Activated T-helper 1 cell treated with anti-CD3 and anti-CD28 coated beads, Interleukin-12 subunit alpha, Interleukin-12 subunit beta, Interleukin-2, Interleukin-4 antibody, amounts not matched to agents 30 ng/mL and 10 ng/mL and 1 ng/mL, durations not matched to agents 14 hours and 24 hours and 36 hours (primary cell): ENCODE measurements at regions of chr1 and their contacts with region 1.

Region 1: GRCh38 chr1:113811888-113812660 is at the start of gene RSBN1:
- DNase-seq: peak; percentile 99
- H3K4me3 Mint-ChIP-seq: peak within 1 kb of the TSS; percentile 96
- H3K27ac Mint-ChIP-seq: peak within 1 kb of the TSS; percentile 96
- H3K4me1 Mint-ChIP-seq: peaks cover 34% of the 10 kb centered on the region
- H3K27me3 Mint-ChIP-seq: no peaks in the 10 kb centered on the region
- total RNA-seq, gene RSBN1: 18.4 and 19.5 TPM in 2 replicates

Region 2: GRCh38 chr1:112715264-112716053 is 1096.6 kb before region 1 on chr1 and contains the start of gene PPM1J:
- intact Hi-C with region 1: loop called (anchors 5 kb)
- DNase-seq: peak; percentile 99
- H3K4me3 Mint-ChIP-seq: peak within 1 kb of the TSS; percentile 86
- H3K27ac Mint-ChIP-seq: peak within 1 kb of the TSS; percentile 27
- H3K4me1 Mint-ChIP-seq: peaks cover 41% of the 10 kb centered on the region
- H3K27me3 Mint-ChIP-seq: peaks cover 29% of the 10 kb centered on the region
- total RNA-seq, gene PPM1J: 0.60 and 1.1 TPM in 2 replicates

Region 3: DNA sequence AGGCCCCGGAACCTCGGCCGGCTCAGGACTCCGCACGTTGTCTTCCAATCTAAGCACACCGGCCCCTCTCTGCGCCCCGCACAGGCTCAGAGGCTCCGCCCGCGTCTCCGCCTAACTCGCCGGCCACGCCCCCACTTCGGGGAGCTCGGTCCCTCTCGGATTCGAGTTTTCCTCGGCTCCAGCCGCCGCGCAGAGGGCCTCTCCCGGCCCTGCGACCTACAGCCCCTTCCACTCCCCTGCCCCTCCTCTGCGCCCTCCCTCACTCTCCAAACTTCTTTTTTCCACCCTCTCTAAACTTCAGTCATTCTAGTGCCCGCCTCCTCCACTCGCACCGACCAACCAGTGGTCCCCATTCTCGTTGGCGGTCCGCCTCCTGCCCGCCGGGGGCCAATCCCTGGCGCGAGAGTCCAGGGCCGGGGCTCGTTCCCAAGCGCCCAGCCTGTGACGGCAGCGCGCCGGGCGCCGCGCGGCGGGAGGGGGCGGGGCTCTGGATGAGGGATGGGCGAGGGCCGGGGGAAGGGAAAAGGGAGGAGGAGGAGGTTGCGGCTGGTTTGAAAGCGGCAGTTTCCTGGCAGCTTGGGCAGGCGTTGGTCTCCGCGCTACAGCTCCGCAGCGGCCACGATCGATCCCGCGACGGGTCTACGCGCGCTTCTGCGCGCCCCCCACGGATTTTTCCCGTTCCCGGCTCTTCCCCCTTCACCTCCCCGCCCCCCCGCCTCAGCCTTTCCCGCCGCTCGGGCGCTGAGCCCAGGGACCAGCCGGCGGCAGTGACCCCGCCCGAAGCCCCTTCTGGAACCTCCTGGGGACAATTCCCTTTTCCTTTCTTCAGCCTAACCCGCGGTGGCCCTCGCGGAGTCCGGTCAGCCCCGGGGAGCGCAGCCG is 421.9 kb before region 1 on chr1 and contains the start of gene MAGI3:
- intact Hi-C with region 1: loop called (anchors 1 kb)
- DNase-seq: peak; percentile 95
- H3K4me3 Mint-ChIP-seq: peak within 1 kb of the TSS; percentile 88
- H3K27ac Mint-ChIP-seq: peak within 1 kb of the TSS; percentile 79
- H3K4me1 Mint-ChIP-seq: peaks cover 30% of the 10 kb centered on the region
- H3K27me3 Mint-ChIP-seq: peaks cover 33% of the 10 kb centered on the region
- total RNA-seq, gene MAGI3: 3.0 and 3.2 TPM in 2 replicates

Region 4: GRCh38 chr1:113835642-113836307 is 23.7 kb after region 1 on chr1:
- intact Hi-C with region 1: loop called (anchors 2 kb)
- DNase-seq: no peak
- H3K4me3 Mint-ChIP-seq: no peak overlapping the region
- H3K27ac Mint-ChIP-seq: no peak overlapping the region
- H3K4me1 Mint-ChIP-seq: peaks cover 7% of the 10 kb centered on the region
- H3K27me3 Mint-ChIP-seq: no peaks in the 10 kb centered on the region

Region 5: GRCh38 chr1:114033216-114033706 is 221.2 kb after region 1 on chr1:
- intact Hi-C with region 1: no loop called
- DNase-seq: no peak
- H3K4me3 Mint-ChIP-seq: no peak overlapping the region
- H3K27ac Mint-ChIP-seq: no peak overlapping the region
- H3K4me1 Mint-ChIP-seq: no peaks in the 10 kb centered on the region
- H3K27me3 Mint-ChIP-seq: no peaks in the 10 kb centered on the region

Region 6: GRCh38 chr1:114511032-114511785 is 699.1 kb after region 1 on chr1 and contains the start of gene TRIM33:
- intact Hi-C with region 1: loop called (anchors 2 kb)
- DNase-seq: peak; percentile 92
- H3K4me3 Mint-ChIP-seq: peak within 1 kb of the TSS; percentile 93
- H3K27ac Mint-ChIP-seq: peak within 1 kb of the TSS; percentile 98
- H3K4me1 Mint-ChIP-seq: peaks cover 45% of the 10 kb centered on the region
- H3K27me3 Mint-ChIP-seq: peaks cover 1% of the 10 kb centered on the region
- total RNA-seq, gene TRIM33: 39.2 and 41.7 TPM in 2 replicates

Region 7: GRCh38 chr1:114757455-114758250 is 945.6 kb after region 1 on chr1 and contains the start of gene CSDE1:
- intact Hi-C with region 1: loop called (anchors 1 kb)
- DNase-seq: peak; percentile 96
- H3K4me3 Mint-ChIP-seq: peak within 1 kb of the TSS; percentile 99
- H3K27ac Mint-ChIP-seq: peak within 1 kb of the TSS; percentile 100
- H3K4me1 Mint-ChIP-seq: peaks cover 42% of the 10 kb centered on the region
- H3K27me3 Mint-ChIP-seq: no peaks in the 10 kb centered on the region
- total RNA-seq, gene CSDE1: 398 and 421 TPM in 2 replicates